Heart left ventricle (tissue), 16 donors: ENCODE measurements at regions of chr13 and their contacts with region 1.

Region 1: GRCh38 chr13:35953537-35954206 is 177.5 kb downstream of the DCLK1 start:
- DNase-seq: peak in 4 of 5 donors; percentile 76 to 84 (median 82)
- ATAC-seq: peak; percentile 87 to 95 (median 92)
- H3K4me3 ChIP-seq: peak overlapping the region in 4 of 12 donors; percentile 20 to 28 (median 22)
- H3K27ac ChIP-seq: peak overlapping the region in 6 of 12 donors; percentile 7 to 46 (median 24)
- H3K4me1 ChIP-seq: peaks cover 0 to 27% (median 4%) of the 10 kb centered on the region in 12 donors
- H3K27me3 ChIP-seq: no peaks in the 10 kb centered on the region
- CTCF ChIP-seq: peak in 11 of 12 donors; percentile 45 to 79 (median 69)
- POLR2A ChIP-seq: no peak

Region 2: GRCh38 chr13:35621989-35622388 is 331.7 kb before region 1 on chr13:
- intact Hi-C with region 1: loop called in 1 of 10 experiments (anchors 10 kb)
- DNase-seq: no peak
- ATAC-seq: no peak
- H3K4me3 ChIP-seq: no peak overlapping the region
- H3K27ac ChIP-seq: no peak overlapping the region
- H3K4me1 ChIP-seq: no peaks in the 10 kb centered on the region
- H3K27me3 ChIP-seq: no peaks in the 10 kb centered on the region
- CTCF ChIP-seq: no peak
- POLR2A ChIP-seq: no peak

Region 3: GRCh38 chr13:35720690-35721554 is 232.8 kb before region 1 on chr13:
- intact Hi-C with region 1: loop called in 5 of 10 experiments (anchors 5 to 10 kb)
- DNase-seq: peak in 4 of 5 donors; percentile 30 to 53 (median 44)
- ATAC-seq: peak in 3 of 4 donors; percentile 7 to 49 (median 20)
- H3K4me3 ChIP-seq: peak overlapping the region in 6 of 12 donors; percentile 23 to 33 (median 28)
- H3K27ac ChIP-seq: peak overlapping the region in 6 of 12 donors; percentile 3 to 44 (median 34)
- H3K4me1 ChIP-seq: peaks cover 0 to 41% (median 23%) of the 10 kb centered on the region in 12 donors
- H3K27me3 ChIP-seq: no peaks in the 10 kb centered on the region
- CTCF ChIP-seq: peak; percentile 80 to 91 (median 84)
- POLR2A ChIP-seq: no peak

Region 4: DNA sequence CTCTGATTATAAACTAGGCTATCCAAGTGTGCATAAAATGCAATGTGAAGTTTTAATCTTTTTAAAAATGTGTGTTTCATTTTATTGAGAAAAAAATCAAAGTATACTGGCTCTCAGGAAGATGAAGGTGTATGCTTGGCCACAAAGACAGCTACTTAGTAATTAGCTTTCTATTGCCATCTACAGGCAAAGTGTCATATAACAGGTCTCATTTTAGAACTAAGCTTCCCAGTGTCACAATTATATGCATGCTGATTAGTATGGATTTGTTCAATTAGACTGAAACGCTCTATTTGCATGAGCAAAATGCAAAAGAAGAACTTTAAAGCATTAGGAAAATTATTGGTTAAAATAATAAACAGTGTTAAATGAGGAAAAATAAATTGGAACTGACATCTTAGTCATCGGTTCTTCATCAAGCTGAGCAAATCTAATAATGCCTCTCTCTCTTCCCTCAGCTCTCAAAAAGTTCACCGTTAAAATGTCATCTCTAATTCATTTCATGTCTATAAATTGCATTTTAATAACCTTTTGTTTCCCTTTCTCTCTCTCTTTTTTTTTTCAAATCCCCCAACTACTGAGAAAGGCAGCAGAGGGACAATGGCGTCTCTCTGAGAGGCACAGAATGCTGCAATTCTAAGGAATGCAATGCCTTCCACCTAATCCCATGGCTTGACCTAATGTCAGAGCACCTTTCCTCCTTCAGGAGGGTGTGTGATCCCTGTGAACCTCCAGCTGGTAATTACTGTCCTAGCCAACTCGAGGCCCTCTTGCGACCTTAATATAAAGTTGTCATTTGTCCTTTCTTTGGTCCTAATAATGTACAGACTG is 164.1 kb before region 1 on chr13:
- intact Hi-C with region 1: loop called in 1 of 10 experiments (anchors 10 kb)
- DNase-seq: no peak
- ATAC-seq: peak in 3 of 4 donors; percentile 60 to 79 (median 64)
- H3K4me3 ChIP-seq: no peak overlapping the region
- H3K27ac ChIP-seq: no peak overlapping the region
- H3K4me1 ChIP-seq: peaks cover 0 to 4% (median 0%) of the 10 kb centered on the region in 12 donors
- H3K27me3 ChIP-seq: no peaks in the 10 kb centered on the region
- CTCF ChIP-seq: peak; percentile 17 to 71 (median 61)
- POLR2A ChIP-seq: no peak

Region 5: DNA sequence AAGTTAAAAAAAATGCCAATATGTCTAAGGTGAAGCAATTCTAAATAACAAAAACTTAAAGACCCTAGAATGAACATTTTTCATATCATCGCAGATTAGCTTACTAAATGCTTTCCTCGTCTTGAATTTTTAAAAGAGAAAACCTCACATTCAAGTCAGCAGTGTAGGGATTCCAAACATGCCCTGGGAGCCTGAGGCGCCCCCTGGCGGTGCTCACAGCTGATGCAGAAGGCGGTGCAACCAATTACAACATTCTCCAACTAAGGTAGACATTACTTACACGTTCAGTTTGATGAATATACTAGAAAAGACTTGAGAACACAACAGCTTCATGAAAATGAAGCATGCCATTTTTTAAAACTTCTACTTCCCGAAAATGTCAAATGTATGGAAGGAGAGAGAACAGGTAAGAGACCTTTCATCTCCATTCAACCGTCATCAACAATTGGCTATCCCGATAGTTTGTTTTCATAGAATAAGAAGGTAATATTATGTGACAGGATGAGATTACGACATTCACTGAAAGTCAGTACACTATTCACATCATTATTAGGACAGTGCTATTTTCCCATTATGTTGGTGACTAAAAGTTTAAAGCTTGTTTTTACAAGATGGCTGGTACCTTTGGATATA is 126.9 kb before region 1 on chr13:
- intact Hi-C with region 1: loop called in 4 of 10 experiments (anchors 2 to 10 kb)
- DNase-seq: no peak
- ATAC-seq: no peak
- H3K4me3 ChIP-seq: no peak overlapping the region
- H3K27ac ChIP-seq: no peak overlapping the region
- H3K4me1 ChIP-seq: no peaks in the 10 kb centered on the region
- H3K27me3 ChIP-seq: no peaks in the 10 kb centered on the region
- CTCF ChIP-seq: peak in 5 of 12 donors; percentile 4 to 20 (median 15)
- POLR2A ChIP-seq: no peak

Region 6: GRCh38 chr13:35888457-35888883 is 65.2 kb before region 1 on chr13:
- intact Hi-C with region 1: loop called in 1 of 10 experiments (anchors 10 kb)
- DNase-seq: no peak
- ATAC-seq: no peak
- H3K4me3 ChIP-seq: no peak overlapping the region
- H3K27ac ChIP-seq: no peak overlapping the region
- H3K4me1 ChIP-seq: peaks cover 0 to 25% (median 1%) of the 10 kb centered on the region in 12 donors
- H3K27me3 ChIP-seq: no peaks in the 10 kb centered on the region
- CTCF ChIP-seq: no peak
- POLR2A ChIP-seq: no peak

Region 7: GRCh38 chr13:36207672-36208071 is 254.0 kb after region 1 on chr13:
- intact Hi-C with region 1: no loop called
- DNase-seq: no peak
- ATAC-seq: no peak
- H3K4me3 ChIP-seq: no peak overlapping the region
- H3K27ac ChIP-seq: no peak overlapping the region
- H3K4me1 ChIP-seq: no peaks in the 10 kb centered on the region
- H3K27me3 ChIP-seq: no peaks in the 10 kb centered on the region
- CTCF ChIP-seq: peak in 2 of 12 donors; percentile 18 to 26
- POLR2A ChIP-seq: no peak

Region 8: DNA sequence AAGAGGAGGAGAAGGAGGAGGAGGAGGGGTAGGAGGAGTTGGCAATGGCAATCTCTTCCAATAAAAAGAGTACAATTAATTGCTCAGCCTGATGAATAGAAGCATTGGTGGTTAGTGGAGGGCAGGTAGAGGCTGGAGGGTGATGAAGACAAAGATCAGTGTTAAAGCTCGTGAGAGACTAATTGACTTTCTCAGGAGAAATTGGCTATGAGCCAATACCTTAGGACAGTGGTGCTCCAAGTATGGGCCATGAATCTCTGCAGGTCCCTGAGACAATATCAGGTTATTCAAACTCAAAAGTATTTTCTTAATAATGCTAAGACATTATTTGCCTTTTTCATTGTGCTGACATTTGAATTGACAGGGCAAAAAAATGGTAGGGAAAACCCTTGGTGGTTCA is 696.4 kb after region 1 on chr13:
- intact Hi-C with region 1: no loop called
- DNase-seq: no peak
- ATAC-seq: no peak
- H3K4me3 ChIP-seq: no peak overlapping the region
- H3K27ac ChIP-seq: no peak overlapping the region
- H3K4me1 ChIP-seq: no peaks in the 10 kb centered on the region
- H3K27me3 ChIP-seq: no peaks in the 10 kb centered on the region
- CTCF ChIP-seq: no peak
- POLR2A ChIP-seq: no peak